H1 (cell line): ENCODE measurements at regions of chr10 and their contacts with region 1.

Region 1: DNA sequence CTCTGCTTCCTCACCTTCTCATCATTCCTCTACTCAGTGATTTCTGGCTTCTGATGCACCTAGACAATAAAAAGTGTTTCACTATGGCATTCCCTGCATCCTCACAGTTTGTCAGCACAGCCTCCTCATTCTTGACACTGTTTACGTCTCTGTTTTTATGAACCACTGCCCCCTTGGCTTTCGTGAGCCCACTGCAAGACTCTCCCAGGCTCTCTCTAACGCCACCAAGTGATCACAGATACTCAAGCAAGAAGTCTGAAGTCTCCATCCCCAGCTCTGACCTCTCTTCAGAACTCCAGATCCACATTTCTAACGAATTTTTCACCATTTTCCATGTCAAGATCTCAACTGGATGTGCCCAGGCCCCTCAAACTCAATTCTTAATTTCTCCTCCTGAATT is 8.9 kb downstream of the SLC16A9 start:
- DNase-seq: no peak
- H3K4me3 ChIP-seq: no peak overlapping the region
- H3K27ac ChIP-seq: no peak overlapping the region
- H3K4me1 ChIP-seq: peaks cover 0 to 3% (median under 1%) of the 10 kb centered on the region in 4 experiments; a peak in 2 of 7 replicates
- H3K27me3 ChIP-seq: no peaks in the 10 kb centered on the region
- CTCF ChIP-seq: peak; percentile 53 to 97 (median 80)
- EP300 ChIP-seq: no peak
- POLR2A ChIP-seq: no peak
- RAD21 ChIP-seq: peak; percentile 54 to 62

Region 2: GRCh38 chr10:59633063-59633462 is 67.6 kb before region 1 on chr10:
- CTCF ChIA-PET with region 1: interaction called, 77 read pairs
- POLR2A ChIA-PET with region 1: no interaction called
- DNase-seq: no peak
- H3K4me3 ChIP-seq: no peak overlapping the region
- H3K27ac ChIP-seq: no peak overlapping the region
- H3K4me1 ChIP-seq: peaks cover 0 to 2% (median 0%) of the 10 kb centered on the region in 4 experiments; a peak in 1 of 7 replicates
- H3K27me3 ChIP-seq: no peaks in the 10 kb centered on the region
- CTCF ChIP-seq: peak; percentile 21 to 46 (median 38); a peak in 3 of 4 replicates
- EP300 ChIP-seq: no peak
- POLR2A ChIP-seq: no peak
- RAD21 ChIP-seq: peak; percentile 24 to 40; a peak in 3 of 4 replicates

Region 3: GRCh38 chr10:59672150-59672875 is 28.4 kb before region 1 on chr10:
- CTCF ChIA-PET with region 1: interaction called, 18 read pairs
- POLR2A ChIA-PET with region 1: no interaction called
- DNase-seq: no peak
- H3K4me3 ChIP-seq: no peak overlapping the region
- H3K27ac ChIP-seq: no peak overlapping the region
- H3K4me1 ChIP-seq: peaks cover 0 to 2% (median 0%) of the 10 kb centered on the region in 4 experiments; a peak in 2 of 7 replicates
- H3K27me3 ChIP-seq: no peaks in the 10 kb centered on the region
- CTCF ChIP-seq: no peak
- EP300 ChIP-seq: no peak
- POLR2A ChIP-seq: no peak
- RAD21 ChIP-seq: no peak

Region 4: GRCh38 chr10:59678884-59679301 is 21.8 kb before region 1 on chr10:
- CTCF ChIA-PET with region 1: interaction called, 18 read pairs
- POLR2A ChIA-PET with region 1: interaction called, 3 read pairs
- DNase-seq: no peak
- H3K4me3 ChIP-seq: no peak overlapping the region
- H3K27ac ChIP-seq: no peak overlapping the region
- H3K4me1 ChIP-seq: peaks cover 0 to 2% (median 0%) of the 10 kb centered on the region in 4 experiments; a peak in 2 of 7 replicates
- H3K27me3 ChIP-seq: no peaks in the 10 kb centered on the region
- CTCF ChIP-seq: no peak
- EP300 ChIP-seq: no peak
- POLR2A ChIP-seq: no peak
- RAD21 ChIP-seq: no peak

Region 5: GRCh38 chr10:59808896-59809643 is 108.4 kb after region 1 on chr10:
- CTCF ChIA-PET with region 1: interaction called, 11 read pairs
- POLR2A ChIA-PET with region 1: no interaction called
- DNase-seq: peak; percentile 43 to 72
- H3K4me3 ChIP-seq: no peak overlapping the region
- H3K27ac ChIP-seq: no peak overlapping the region
- H3K4me1 ChIP-seq: peaks cover 0 to 10% (median 2%) of the 10 kb centered on the region in 4 experiments; a peak in 5 of 7 replicates
- H3K27me3 ChIP-seq: no peaks in the 10 kb centered on the region; a peak in 1 of 7 replicates
- CTCF ChIP-seq: peak; percentile 58 to 87 (median 84)
- EP300 ChIP-seq: no peak
- POLR2A ChIP-seq: no peak
- RAD21 ChIP-seq: peak; percentile 64 to 71